Common myeloid progenitor, CD34-positive (primary cell): ENCODE measurements at regions of chr5 and their contacts with region 1.

Region 1: GRCh38 chr5:95620870-95621837 is 1.3 kb downstream of the GPR150 start:
- DNase-seq: peak in 2 of 3 donors; percentile 53 to 69
- H3K4me3 ChIP-seq: peak overlapping the region; percentile 2 to 77 (median 60)
- H3K27ac ChIP-seq: no peak overlapping the region
- H3K4me1 ChIP-seq: peaks cover 11 to 45% (median 37%) of the 10 kb centered on the region in 4 experiments
- H3K27me3 ChIP-seq: peaks cover 0 to 3% (median 0%) of the 10 kb centered on the region in 5 experiments

Region 2: DNA sequence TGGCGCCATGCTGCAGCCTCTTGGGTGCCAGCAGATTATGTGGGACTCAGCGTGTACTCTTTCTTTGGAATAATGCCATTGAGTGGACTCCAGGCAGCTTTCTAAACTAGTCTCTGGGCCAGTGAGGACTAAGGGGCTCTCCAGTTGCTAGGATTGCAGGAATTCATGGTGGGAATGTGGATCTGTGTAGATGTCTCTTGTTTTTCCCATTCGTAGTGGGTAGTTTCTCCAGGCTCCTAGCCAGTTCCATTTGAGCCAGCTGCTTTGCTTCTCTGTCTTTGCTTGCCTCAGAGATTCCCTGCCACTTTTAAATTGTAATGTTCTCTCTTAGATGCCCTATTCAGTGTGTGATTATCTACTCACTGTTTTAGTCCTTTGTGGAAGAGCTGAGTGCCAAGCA is 960.1 kb before region 1 on chr5:
- CTCF ChIA-PET with region 1: no interaction called
- POLR2A ChIA-PET with region 1: no interaction called
- DNase-seq: no peak
- H3K4me3 ChIP-seq: no peak overlapping the region
- H3K27ac ChIP-seq: no peak overlapping the region
- H3K4me1 ChIP-seq: no peaks in the 10 kb centered on the region
- H3K27me3 ChIP-seq: no peaks in the 10 kb centered on the region

Region 3: DNA sequence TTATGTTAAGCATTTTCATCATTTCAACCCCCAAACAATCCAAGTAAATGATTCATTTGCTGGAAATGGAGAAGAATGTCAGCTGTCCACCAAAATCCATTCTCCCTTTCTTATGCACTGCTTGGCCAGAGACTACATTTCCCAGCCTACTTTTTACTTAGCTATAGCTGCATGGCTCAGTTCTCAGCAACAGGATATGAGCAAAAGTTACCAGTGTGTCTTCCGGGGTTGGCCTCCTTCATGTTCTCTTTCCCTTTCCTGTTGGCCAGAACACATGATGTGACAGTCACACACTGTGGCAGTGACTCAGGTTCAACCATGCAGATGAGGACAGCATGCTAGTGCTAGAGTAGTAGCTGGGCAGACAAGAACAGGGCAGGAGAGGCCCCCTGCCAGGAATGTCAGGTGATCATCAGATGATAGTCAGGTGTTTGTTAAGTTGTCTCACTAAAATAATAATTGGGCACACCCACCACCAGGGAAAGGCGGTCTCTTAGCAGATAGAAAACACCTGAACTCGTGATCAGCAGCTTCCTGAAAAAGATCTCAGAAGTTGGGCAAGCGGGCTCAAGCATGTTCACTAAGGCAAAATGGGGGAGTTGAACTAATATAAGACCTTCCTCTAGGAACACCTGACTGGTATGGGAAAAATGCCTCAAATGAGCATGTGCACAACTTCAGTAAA is 11.0 kb after region 1 on chr5:
- CTCF ChIA-PET with region 1: interaction called, 14 read pairs
- POLR2A ChIA-PET with region 1: no interaction called
- DNase-seq: peak in 2 of 3 donors; percentile 66 to 80
- H3K4me3 ChIP-seq: no peak overlapping the region
- H3K27ac ChIP-seq: no peak overlapping the region
- H3K4me1 ChIP-seq: peaks cover 0 to 4% (median 0%) of the 10 kb centered on the region in 4 experiments
- H3K27me3 ChIP-seq: no peaks in the 10 kb centered on the region

Region 4: GRCh38 chr5:95646554-95647431 is 25.6 kb after region 1 on chr5 and contains the start of gene RFESD:
- CTCF ChIA-PET with region 1: interaction called, 16 read pairs
- POLR2A ChIA-PET with region 1: interaction called, 5 read pairs
- DNase-seq: peak; percentile 97 to 99 (median 99)
- H3K4me3 ChIP-seq: peak within 1 kb of the TSS; percentile 13 to 76 (median 63)
- H3K27ac ChIP-seq: peak within 1 kb of the TSS; percentile 60 to 83
- H3K4me1 ChIP-seq: peaks cover 12 to 31% (median 20%) of the 10 kb centered on the region in 4 experiments
- H3K27me3 ChIP-seq: no peaks in the 10 kb centered on the region